Activated naive CD4-positive, alpha-beta T cell treated with anti-CD3 and anti-CD28 coated beads for 36 hours (primary cell): ENCODE measurements at regions of chr6 and their contacts with region 1.

Region 1: GRCh38 chr6:26342106-26343004 is 22.6 kb upstream of the BTN3A2 start:
- DNase-seq: peak; percentile 53
- H3K4me3 Mint-ChIP-seq: peak overlapping the region; percentile 77
- H3K27ac Mint-ChIP-seq: peak overlapping the region; percentile 39
- H3K4me1 Mint-ChIP-seq: peaks cover 4% of the 10 kb centered on the region
- H3K27me3 Mint-ChIP-seq: peaks cover 2% of the 10 kb centered on the region

Region 2: DNA sequence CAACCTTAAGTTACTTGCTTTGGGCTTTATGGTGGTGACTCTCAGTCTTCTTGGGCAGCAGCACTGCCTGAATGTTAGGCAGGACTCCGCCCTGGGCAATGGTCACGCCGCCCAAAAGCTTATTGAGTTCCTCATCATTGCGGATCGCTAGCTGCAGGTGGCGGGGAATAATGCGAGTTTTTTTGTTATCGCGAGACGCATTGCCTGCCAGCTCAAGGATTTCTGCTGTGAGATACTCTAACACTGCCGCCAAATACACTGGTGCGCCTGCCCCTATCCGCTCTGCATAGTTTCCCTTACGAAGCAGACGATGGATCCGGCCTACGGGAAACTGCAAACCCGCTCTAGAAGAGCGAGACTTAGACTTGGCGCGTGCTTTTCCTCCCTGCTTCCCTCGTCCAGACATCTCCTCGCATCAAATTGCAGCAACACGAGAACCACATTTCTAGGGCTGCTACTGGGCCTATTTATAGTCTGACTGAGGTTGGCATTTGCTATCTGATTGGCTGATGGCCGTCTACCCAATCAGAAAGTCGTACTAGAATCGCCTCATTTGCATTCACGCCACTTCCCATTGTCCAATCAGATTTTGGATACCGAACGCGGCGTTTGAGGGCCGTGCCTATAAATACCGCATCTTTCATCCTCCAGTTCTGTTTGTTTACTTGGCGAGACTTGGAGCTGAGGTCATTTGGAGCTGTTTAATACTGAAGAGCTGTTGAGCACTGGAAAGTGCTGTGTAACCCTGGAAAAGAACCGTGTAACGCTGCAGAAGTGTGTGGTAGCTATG is 616.0 kb before region 1 on chr6:
- CTCF ChIA-PET with region 1: no interaction called
- intact Hi-C with region 1: no loop called
- DNase-seq: no peak
- H3K4me3 Mint-ChIP-seq: no peak overlapping the region
- H3K27ac Mint-ChIP-seq: no peak overlapping the region
- H3K4me1 Mint-ChIP-seq: no peaks in the 10 kb centered on the region
- H3K27me3 Mint-ChIP-seq: peaks cover 25% of the 10 kb centered on the region

Region 3: GRCh38 chr6:26280407-26280806 is 61.9 kb before region 1 on chr6:
- CTCF ChIA-PET with region 1: no interaction called
- intact Hi-C with region 1: no loop called
- DNase-seq: no peak
- H3K4me3 Mint-ChIP-seq: no peak overlapping the region
- H3K27ac Mint-ChIP-seq: no peak overlapping the region
- H3K4me1 Mint-ChIP-seq: peaks cover 11% of the 10 kb centered on the region
- H3K27me3 Mint-ChIP-seq: no peaks in the 10 kb centered on the region

Region 4: DNA sequence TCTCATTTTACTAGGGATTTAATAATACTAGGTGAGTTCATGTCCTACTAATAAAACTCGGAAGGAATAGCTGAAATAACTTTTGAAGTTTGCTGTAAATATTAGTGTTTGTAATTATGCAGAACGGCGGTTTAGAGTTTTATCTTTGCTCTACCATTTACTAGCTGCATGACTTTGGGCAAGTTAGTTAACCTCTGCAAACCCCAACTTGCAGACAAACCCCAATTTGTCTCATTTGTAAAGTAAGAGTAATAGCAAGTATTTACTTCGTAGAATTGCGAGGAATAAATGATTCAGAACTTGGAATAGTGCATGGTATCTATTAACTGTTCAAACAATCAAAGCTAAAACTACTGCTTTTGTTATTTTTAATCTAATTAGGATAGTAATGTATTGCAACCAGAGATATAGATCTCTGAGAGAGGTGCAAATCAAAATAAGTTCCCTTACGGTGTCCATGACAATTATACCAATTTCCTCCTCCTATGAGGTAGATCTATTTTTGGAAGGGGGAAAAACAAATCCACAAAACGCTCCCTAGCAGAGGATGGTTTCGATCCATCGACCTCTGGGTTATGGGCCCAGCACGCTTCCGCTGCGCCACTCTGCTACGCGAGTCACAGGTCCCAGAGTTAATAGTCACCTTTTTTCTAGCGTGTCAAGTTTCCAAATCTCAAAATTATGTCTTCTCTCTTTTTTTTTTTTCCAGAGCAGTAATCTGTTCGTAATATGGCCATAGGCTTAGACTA is 12.4 kb before region 1 on chr6:
- CTCF ChIA-PET with region 1: interaction called, 4 read pairs
- intact Hi-C with region 1: loop called (anchors 1 kb)
- DNase-seq: peak; percentile 81
- H3K4me3 Mint-ChIP-seq: peak overlapping the region; percentile 82
- H3K27ac Mint-ChIP-seq: peak overlapping the region; percentile 90
- H3K4me1 Mint-ChIP-seq: peaks cover 35% of the 10 kb centered on the region
- H3K27me3 Mint-ChIP-seq: peaks cover 28% of the 10 kb centered on the region

Region 5: DNA sequence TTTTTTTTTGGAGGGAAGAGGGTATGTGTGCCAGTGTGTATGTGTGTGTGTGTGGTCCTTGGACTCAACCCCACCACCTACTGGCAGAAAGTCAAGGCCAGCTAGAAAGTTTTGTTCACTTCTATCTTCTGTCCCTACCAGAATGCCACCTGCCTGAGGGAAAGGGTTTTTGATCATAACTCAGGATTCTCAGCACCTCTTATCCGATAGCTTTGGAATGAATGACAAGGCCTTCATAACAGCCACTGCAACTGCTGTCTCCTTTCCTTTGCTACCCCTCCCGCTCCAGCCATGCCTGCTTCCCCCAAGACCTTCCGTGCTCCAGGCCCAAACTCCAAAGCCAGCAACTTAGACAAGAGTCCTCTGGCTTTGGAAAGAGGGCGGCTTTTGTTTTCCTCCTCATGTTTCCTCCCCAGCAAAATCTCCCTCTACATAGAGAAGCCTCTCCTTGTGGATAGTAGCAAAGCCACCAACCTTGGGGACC is 78.4 kb after region 1 on chr6:
- CTCF ChIA-PET with region 1: interaction called, 6 read pairs
- intact Hi-C with region 1: loop called (anchors 1 kb)
- DNase-seq: peak; percentile 38
- H3K4me3 Mint-ChIP-seq: no peak overlapping the region
- H3K27ac Mint-ChIP-seq: no peak overlapping the region
- H3K4me1 Mint-ChIP-seq: peaks cover 4% of the 10 kb centered on the region
- H3K27me3 Mint-ChIP-seq: no peaks in the 10 kb centered on the region

Region 6: GRCh38 chr6:26493258-26493657 is 150.9 kb after region 1 on chr6:
- CTCF ChIA-PET with region 1: interaction called, 4 read pairs
- intact Hi-C with region 1: loop called (anchors 1 kb)
- DNase-seq: no peak
- H3K4me3 Mint-ChIP-seq: no peak overlapping the region
- H3K27ac Mint-ChIP-seq: no peak overlapping the region
- H3K4me1 Mint-ChIP-seq: peaks cover 3% of the 10 kb centered on the region
- H3K27me3 Mint-ChIP-seq: no peaks in the 10 kb centered on the region

Region 7: DNA sequence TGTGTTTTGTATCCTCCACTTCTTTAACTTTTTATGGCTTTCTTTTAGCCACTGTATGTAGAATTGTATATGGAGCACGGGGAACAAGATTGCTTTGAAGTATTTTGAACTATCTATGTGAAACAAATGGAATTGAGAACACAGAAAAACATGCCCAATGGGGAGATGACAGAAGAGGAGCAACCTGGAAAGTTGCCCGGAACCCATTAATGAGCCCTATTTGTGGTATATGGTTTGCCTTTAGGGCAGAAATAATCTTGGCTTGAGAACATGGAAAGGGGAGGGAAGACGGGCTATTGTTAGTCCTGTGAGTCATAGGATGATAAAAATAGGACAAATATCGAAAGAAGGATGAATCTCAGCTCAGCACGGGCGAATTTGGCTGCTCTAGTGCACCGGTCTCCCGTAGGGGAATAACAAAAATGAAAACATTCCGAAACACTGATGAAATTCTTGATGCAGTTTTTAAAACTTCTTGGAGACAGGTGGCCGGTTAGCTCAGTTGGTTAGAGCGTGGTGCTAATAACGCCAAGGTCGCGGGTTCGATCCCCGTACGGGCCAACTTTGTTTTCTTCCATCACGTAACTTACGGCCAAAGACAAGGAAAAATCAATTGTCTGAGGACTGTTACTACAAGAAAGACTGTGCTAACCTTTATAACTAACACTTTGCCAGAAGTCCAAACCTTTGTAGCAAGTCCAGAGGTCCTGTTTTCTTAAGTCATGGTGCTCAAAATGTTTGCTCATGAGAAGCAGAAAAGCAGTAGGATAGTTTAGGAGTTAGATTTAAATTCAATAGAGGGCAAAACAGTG is 211.5 kb after region 1 on chr6:
- CTCF ChIA-PET with region 1: no interaction called
- intact Hi-C with region 1: loop called (anchors 5 kb)
- DNase-seq: peak; percentile 91
- H3K4me3 Mint-ChIP-seq: no peak overlapping the region
- H3K27ac Mint-ChIP-seq: no peak overlapping the region
- H3K4me1 Mint-ChIP-seq: peaks cover 26% of the 10 kb centered on the region
- H3K27me3 Mint-ChIP-seq: no peaks in the 10 kb centered on the region

Region 8: GRCh38 chr6:26596579-26597388 is 254.4 kb after region 1 on chr6 and contains the start of gene ABT1:
- CTCF ChIA-PET with region 1: interaction called, 15 read pairs
- intact Hi-C with region 1: loop called (anchors 1 kb)
- DNase-seq: peak; percentile 99
- H3K4me3 Mint-ChIP-seq: no peak within 1 kb of the TSS
- H3K27ac Mint-ChIP-seq: no peak within 1 kb of the TSS
- H3K4me1 Mint-ChIP-seq: peaks cover 53% of the 10 kb centered on the region
- H3K27me3 Mint-ChIP-seq: peaks cover 24% of the 10 kb centered on the region
- total RNA-seq, gene ABT1: 17.3 to 18.4 TPM

Region 9: GRCh38 chr6:27078734-27079357 is 736.5 kb after region 1 on chr6:
- CTCF ChIA-PET with region 1: no interaction called
- intact Hi-C with region 1: loop called (anchors 5 kb)
- DNase-seq: peak; percentile 64
- H3K4me3 Mint-ChIP-seq: peak overlapping the region; percentile 67
- H3K27ac Mint-ChIP-seq: no peak overlapping the region
- H3K4me1 Mint-ChIP-seq: peaks cover 2% of the 10 kb centered on the region
- H3K27me3 Mint-ChIP-seq: peaks cover 26% of the 10 kb centered on the region

Region 10: GRCh38 chr6:27575594-27576361 is 1233.4 kb after region 1 on chr6:
- CTCF ChIA-PET with region 1: no interaction called
- intact Hi-C with region 1: no loop called
- DNase-seq: no peak
- H3K4me3 Mint-ChIP-seq: no peak overlapping the region
- H3K27ac Mint-ChIP-seq: no peak overlapping the region
- H3K4me1 Mint-ChIP-seq: no peaks in the 10 kb centered on the region
- H3K27me3 Mint-ChIP-seq: peaks cover 47% of the 10 kb centered on the region